GM12878 (cell line): ENCODE measurements at regions of chr3 and their contacts with region 1.

Region 1: DNA sequence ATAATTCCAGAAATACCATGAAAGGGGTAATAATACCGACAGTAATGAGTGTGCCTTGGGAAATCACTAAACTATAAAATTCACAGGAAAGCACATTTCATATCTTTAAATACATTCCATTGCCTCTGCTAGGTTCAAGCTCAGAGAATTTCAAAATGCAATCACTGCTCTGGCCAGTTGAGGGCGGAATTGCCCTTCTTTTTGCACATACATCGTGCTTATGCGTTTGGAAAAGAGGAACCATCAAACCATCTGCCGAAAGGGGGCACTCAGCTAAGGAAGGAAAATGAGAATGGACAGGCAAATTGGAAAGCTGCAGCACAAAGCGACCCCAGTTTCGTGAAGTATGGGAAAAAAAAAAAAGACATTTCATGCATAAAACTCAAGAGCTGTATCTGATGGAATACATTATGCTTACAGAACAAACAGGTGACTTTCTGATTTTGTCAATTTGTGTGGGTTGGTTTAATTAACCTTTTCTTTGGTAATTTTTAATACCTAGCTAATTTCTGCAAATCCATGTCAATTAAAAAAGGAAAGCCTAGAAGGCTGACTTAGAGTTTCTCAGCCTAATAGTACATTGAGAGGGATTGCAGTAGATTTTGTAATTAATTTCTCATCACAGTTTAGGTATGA is 61.4 kb downstream of the TUSC7 start:
- DNase-seq: peak; percentile 37
- ATAC-seq: peak; percentile 98
- H3K4me3 ChIP-seq: no peak overlapping the region
- H3K27ac ChIP-seq: no peak overlapping the region
- H3K4me1 ChIP-seq: no peaks in the 10 kb centered on the region
- H3K27me3 ChIP-seq: no peaks in the 10 kb centered on the region
- CTCF ChIP-seq: peak; percentile 89 to 99 (median 99)
- EP300 ChIP-seq: no peak
- POLR2A ChIP-seq: no peak
- RAD21 ChIP-seq: peak; percentile 99

Region 2: GRCh38 chr3:116483135-116483534 is 287.8 kb before region 1 on chr3:
- CTCF ChIA-PET with region 1: no interaction called
- POLR2A ChIA-PET with region 1: no interaction called
- RAD21 ChIA-PET with region 1: no interaction called
- SMC1A ChIA-PET with region 1: no interaction called
- in situ Hi-C with region 1: no loop called
- intact Hi-C with region 1: no loop called
- DNase-seq: no peak
- ATAC-seq: no peak
- H3K4me3 ChIP-seq: no peak overlapping the region
- H3K27ac ChIP-seq: no peak overlapping the region
- H3K4me1 ChIP-seq: no peaks in the 10 kb centered on the region
- H3K27me3 ChIP-seq: no peaks in the 10 kb centered on the region
- CTCF ChIP-seq: no peak
- EP300 ChIP-seq: no peak
- POLR2A ChIP-seq: no peak
- RAD21 ChIP-seq: no peak

Region 3: DNA sequence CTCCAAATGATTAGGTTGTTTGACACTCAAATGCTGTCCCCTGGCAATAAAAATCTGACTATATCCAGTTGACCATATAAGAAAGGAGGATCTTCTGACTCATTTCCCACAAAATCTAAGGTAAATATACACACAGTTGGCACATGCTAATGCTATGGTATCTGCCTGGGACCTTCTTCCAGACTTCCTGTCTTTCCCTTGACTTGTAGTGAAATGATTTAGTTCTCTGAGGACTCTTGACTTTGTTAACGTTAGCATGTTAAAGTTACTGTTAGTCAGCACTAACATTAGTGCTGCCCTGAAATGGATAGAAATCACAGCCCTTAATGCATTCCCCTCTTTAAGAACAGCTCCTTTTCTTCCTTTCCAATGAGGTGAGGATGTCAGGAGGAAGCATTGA is 201.3 kb before region 1 on chr3:
- CTCF ChIA-PET with region 1: no interaction called
- POLR2A ChIA-PET with region 1: no interaction called
- RAD21 ChIA-PET with region 1: no interaction called
- SMC1A ChIA-PET with region 1: no interaction called
- in situ Hi-C with region 1: no loop called
- intact Hi-C with region 1: no loop called
- DNase-seq: no peak
- ATAC-seq: no peak
- H3K4me3 ChIP-seq: no peak overlapping the region
- H3K27ac ChIP-seq: no peak overlapping the region
- H3K4me1 ChIP-seq: no peaks in the 10 kb centered on the region
- H3K27me3 ChIP-seq: no peaks in the 10 kb centered on the region
- CTCF ChIP-seq: no peak
- EP300 ChIP-seq: no peak
- POLR2A ChIP-seq: no peak
- RAD21 ChIP-seq: no peak

Region 4: GRCh38 chr3:116757315-116757714 is 13.6 kb before region 1 on chr3:
- CTCF ChIA-PET with region 1: interaction called, 18 read pairs
- POLR2A ChIA-PET with region 1: no interaction called
- RAD21 ChIA-PET with region 1: no interaction called
- SMC1A ChIA-PET with region 1: interaction called, 4 read pairs
- in situ Hi-C with region 1: no loop called
- intact Hi-C with region 1: no loop called
- DNase-seq: no peak
- ATAC-seq: no peak
- H3K4me3 ChIP-seq: no peak overlapping the region
- H3K27ac ChIP-seq: no peak overlapping the region
- H3K4me1 ChIP-seq: no peaks in the 10 kb centered on the region
- H3K27me3 ChIP-seq: no peaks in the 10 kb centered on the region
- CTCF ChIP-seq: no peak
- EP300 ChIP-seq: no peak
- POLR2A ChIP-seq: no peak
- RAD21 ChIP-seq: no peak

Region 5: DNA sequence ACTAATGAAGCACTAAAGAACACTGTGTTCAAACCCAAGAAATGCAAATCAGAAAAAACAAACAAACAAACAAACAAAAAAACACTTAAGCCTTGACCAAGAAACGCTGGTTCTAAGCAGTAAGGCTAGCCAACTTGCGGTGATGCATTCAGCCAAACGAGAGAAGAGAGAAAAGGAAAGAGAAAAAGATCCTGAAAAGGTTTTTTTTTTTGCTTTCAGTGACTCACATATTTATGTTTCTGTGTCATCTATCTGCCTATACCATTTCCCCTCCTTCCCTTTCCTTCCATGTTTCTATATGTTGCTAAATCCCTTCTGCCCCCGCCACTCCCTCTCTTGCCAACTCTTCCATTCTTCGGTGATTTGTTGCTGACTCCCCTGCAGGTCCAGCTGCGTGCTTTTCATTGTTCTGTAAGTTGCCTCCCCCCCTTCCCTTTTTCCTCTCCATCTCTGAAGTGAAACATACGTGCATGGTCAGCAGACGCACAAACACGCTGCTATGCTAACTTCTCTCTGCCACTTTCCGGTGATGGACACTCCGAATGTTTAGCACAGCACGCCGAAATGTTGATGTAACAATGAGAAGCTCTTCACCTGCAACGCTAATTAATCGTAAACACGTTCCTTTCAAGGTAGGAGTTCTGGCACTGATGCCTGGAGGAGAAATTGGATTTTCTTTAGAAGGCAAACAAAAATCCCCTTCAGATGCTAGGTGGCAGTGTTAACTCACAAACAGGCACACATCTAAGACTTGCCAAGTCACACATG is 93.1 kb after region 1 on chr3:
- CTCF ChIA-PET with region 1: interaction called, 6 read pairs
- POLR2A ChIA-PET with region 1: no interaction called
- RAD21 ChIA-PET with region 1: interaction called, 4 read pairs
- SMC1A ChIA-PET with region 1: interaction called, 5 read pairs
- in situ Hi-C with region 1: no loop called
- intact Hi-C with region 1: loop called (anchors 5 kb)
- DNase-seq: peak; percentile 17
- ATAC-seq: peak; percentile 84
- H3K4me3 ChIP-seq: 0 out of 2 replicates have a peak overlapping the region, but pooled peaks have one; percentile 26
- H3K27ac ChIP-seq: no peak overlapping the region
- H3K4me1 ChIP-seq: no peaks in the 10 kb centered on the region
- H3K27me3 ChIP-seq: peaks cover 0 to 6% of the 10 kb centered on the region in 2 experiments; a peak in 1 of 4 replicates
- CTCF ChIP-seq: peak; percentile 45 to 64 (median 62); a peak in 5 of 6 replicates
- EP300 ChIP-seq: no peak
- POLR2A ChIP-seq: no peak
- RAD21 ChIP-seq: peak; percentile 92

Region 6: DNA sequence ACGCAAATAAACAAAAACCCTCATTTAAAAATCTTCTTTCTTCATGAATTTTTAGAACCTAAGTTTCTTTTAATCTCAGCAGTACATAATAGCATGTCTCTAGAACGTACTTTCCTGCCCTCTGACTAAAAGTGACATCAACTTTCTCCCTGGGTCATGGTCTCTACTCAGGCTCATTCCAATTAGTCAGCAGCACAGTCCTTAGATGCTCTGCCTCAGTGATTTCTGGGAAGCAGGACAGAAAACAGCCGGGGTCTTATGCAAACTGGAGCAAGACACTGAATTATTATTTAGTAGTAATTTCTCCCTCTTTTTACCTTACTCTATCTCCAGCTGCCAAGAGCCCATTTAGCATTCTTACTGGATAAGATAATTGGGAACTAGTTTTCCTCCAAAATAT is 303.9 kb after region 1 on chr3:
- CTCF ChIA-PET with region 1: no interaction called
- POLR2A ChIA-PET with region 1: no interaction called
- RAD21 ChIA-PET with region 1: no interaction called
- SMC1A ChIA-PET with region 1: no interaction called
- in situ Hi-C with region 1: no loop called
- intact Hi-C with region 1: loop called (anchors 10 kb)
- DNase-seq: no peak
- ATAC-seq: no peak
- H3K4me3 ChIP-seq: no peak overlapping the region
- H3K27ac ChIP-seq: no peak overlapping the region
- H3K4me1 ChIP-seq: no peaks in the 10 kb centered on the region
- H3K27me3 ChIP-seq: no peaks in the 10 kb centered on the region; a peak in 1 of 4 replicates
- CTCF ChIP-seq: no peak
- EP300 ChIP-seq: no peak
- POLR2A ChIP-seq: no peak
- RAD21 ChIP-seq: no peak

Region 7: DNA sequence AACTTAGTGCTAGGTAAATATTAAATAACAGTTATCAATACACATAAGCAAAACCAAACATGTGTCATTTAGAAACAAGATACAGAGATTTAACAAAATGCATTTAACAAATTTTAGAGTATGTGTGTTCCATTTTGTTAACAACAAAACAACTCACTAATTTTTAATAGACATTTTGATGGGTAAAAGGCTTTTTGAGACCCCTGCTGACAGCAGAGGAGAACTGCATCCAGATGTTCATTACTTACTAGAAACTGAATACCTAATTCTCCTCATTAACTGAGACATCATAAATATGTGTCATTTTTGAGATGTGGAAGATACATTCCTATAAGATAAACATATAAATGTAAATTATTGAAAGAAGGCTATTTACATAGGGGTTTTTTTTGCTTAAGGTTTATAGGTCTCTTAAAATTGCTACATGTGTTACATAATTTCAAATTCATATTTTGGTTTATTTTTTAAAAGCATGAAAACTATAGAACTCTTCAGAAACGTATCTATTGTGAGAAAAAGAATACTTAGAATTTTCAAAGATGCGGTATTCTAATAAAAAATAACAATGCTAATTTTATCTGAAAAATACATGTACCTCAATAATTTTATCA is 948.5 kb after region 1 on chr3:
- CTCF ChIA-PET with region 1: interaction called, 9 read pairs
- POLR2A ChIA-PET with region 1: no interaction called
- RAD21 ChIA-PET with region 1: interaction called, 5 read pairs
- SMC1A ChIA-PET with region 1: no interaction called
- in situ Hi-C with region 1: no loop called
- intact Hi-C with region 1: loop called (anchors 2 kb)
- DNase-seq: no peak
- ATAC-seq: peak; percentile 54; the same call in 2 of the 3 replicates
- H3K4me3 ChIP-seq: no peak overlapping the region
- H3K27ac ChIP-seq: no peak overlapping the region
- H3K4me1 ChIP-seq: no peaks in the 10 kb centered on the region
- H3K27me3 ChIP-seq: no peaks in the 10 kb centered on the region; a peak in 1 of 4 replicates
- CTCF ChIP-seq: peak; percentile 50 to 57 (median 55)
- EP300 ChIP-seq: no peak
- POLR2A ChIP-seq: no peak
- RAD21 ChIP-seq: peak; percentile 54; the same call in 1 of the 2 replicates

Region 8: DNA sequence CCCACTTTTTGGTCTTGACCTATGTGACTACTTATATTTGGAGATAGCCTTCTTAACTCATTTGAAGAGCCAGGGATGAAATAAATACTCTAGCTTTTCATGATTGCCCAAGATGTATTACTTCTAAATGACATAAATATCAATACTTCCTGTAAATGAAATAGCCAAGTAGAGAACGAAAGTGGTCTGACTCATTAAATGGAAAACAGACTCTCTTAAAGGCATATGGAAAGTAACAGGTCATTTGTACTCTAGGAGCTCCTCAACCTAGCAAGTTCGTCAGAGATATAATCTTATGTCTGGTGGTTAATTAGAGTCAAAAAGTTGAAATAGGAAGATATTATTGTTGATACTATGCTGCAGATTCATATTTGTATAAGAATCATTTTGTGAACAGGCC is 1044.0 kb after region 1 on chr3:
- CTCF ChIA-PET with region 1: no interaction called
- POLR2A ChIA-PET with region 1: no interaction called
- RAD21 ChIA-PET with region 1: no interaction called
- SMC1A ChIA-PET with region 1: no interaction called
- in situ Hi-C with region 1: no loop called
- intact Hi-C with region 1: no loop called
- DNase-seq: no peak
- ATAC-seq: no peak
- H3K4me3 ChIP-seq: no peak overlapping the region
- H3K27ac ChIP-seq: no peak overlapping the region
- H3K4me1 ChIP-seq: no peaks in the 10 kb centered on the region
- H3K27me3 ChIP-seq: no peaks in the 10 kb centered on the region
- CTCF ChIP-seq: no peak
- EP300 ChIP-seq: no peak
- POLR2A ChIP-seq: no peak
- RAD21 ChIP-seq: no peak